Activated CD4-positive, alpha-beta memory T cell treated with anti-CD3 and anti-CD28 coated beads for 36 hours (primary cell): ENCODE measurements at regions of chr1 and their contacts with region 1.

Region 1: GRCh38 chr1:167447521-167448136 is 70.7 kb downstream of the CD247 start:
- DNase-seq: peak; percentile 90
- H3K4me3 Mint-ChIP-seq: peak overlapping the region; percentile 56
- H3K27ac Mint-ChIP-seq: peak overlapping the region; percentile 95
- H3K4me1 Mint-ChIP-seq: peaks cover 74% of the 10 kb centered on the region
- H3K27me3 Mint-ChIP-seq: no peaks in the 10 kb centered on the region

Region 2: GRCh38 chr1:167066333-167067122 is 381.1 kb before region 1 on chr1:
- CTCF ChIA-PET with region 1: no interaction called
- POLR2A ChIA-PET with region 1: no interaction called
- intact Hi-C with region 1: loop called (anchors 2 kb)
- DNase-seq: peak; percentile 83
- H3K4me3 Mint-ChIP-seq: peak overlapping the region; percentile 30
- H3K27ac Mint-ChIP-seq: no peak overlapping the region
- H3K4me1 Mint-ChIP-seq: peaks cover 2% of the 10 kb centered on the region
- H3K27me3 Mint-ChIP-seq: no peaks in the 10 kb centered on the region

Region 3: GRCh38 chr1:167499664-167500101 is 52.1 kb after region 1 on chr1:
- CTCF ChIA-PET with region 1: interaction called, 16 read pairs
- POLR2A ChIA-PET with region 1: interaction called, 26 read pairs
- intact Hi-C with region 1: no loop called
- DNase-seq: peak; percentile 54
- H3K4me3 Mint-ChIP-seq: no peak overlapping the region
- H3K27ac Mint-ChIP-seq: peak overlapping the region; percentile 87
- H3K4me1 Mint-ChIP-seq: peaks cover 99% of the 10 kb centered on the region
- H3K27me3 Mint-ChIP-seq: no peaks in the 10 kb centered on the region

Region 4: GRCh38 chr1:167542109-167543032 is 94.7 kb after region 1 on chr1:
- CTCF ChIA-PET with region 1: interaction called, 14 read pairs
- POLR2A ChIA-PET with region 1: no interaction called
- intact Hi-C with region 1: no loop called
- DNase-seq: peak; percentile 33
- H3K4me3 Mint-ChIP-seq: no peak overlapping the region
- H3K27ac Mint-ChIP-seq: peak overlapping the region; percentile 18
- H3K4me1 Mint-ChIP-seq: peaks cover 46% of the 10 kb centered on the region
- H3K27me3 Mint-ChIP-seq: no peaks in the 10 kb centered on the region

Region 5: DNA sequence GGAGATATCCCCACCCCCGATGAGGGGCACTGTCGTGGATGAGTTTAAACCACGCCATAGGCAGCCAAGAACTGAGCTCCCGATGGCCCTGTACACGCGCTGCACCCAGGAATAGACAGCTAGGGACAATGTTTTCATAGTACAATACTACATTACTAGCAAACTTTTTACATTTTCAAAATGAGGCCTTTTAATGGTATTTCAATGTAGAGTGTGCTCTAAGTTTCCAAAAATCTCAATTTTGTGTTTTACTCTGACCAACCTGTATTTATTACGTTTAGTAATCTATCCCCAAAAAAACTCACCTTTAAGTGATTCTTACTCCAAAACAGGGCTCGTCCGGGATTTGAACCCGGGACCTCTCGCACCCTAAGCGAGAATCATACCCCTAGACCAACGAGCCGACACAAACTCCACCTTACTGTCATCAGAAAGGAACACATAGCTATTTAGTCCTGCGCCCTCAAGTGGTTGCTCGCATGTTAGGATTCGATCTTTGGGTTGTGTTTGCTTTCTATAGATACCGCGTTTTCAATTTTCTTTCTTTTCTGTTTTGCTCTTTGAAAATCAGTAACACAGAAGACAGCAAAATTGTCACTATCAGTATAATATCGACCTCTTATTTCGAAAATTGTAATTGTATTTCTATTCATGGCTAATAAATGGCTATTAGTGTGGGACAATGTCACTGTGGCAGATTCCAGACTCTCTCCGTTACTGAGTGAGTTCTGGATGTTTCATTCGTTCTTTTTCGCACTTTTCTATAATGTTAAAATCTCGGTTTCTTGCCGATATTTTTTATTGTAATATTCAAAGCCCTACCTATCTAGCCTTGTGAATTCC is 267.7 kb after region 1 on chr1:
- CTCF ChIA-PET with region 1: no interaction called
- POLR2A ChIA-PET with region 1: no interaction called
- intact Hi-C with region 1: loop called (anchors 2 kb)
- DNase-seq: peak; percentile 93
- H3K4me3 Mint-ChIP-seq: peak overlapping the region; percentile 80
- H3K27ac Mint-ChIP-seq: peak overlapping the region; percentile 93
- H3K4me1 Mint-ChIP-seq: peaks cover 35% of the 10 kb centered on the region
- H3K27me3 Mint-ChIP-seq: peaks cover 7% of the 10 kb centered on the region